CD14-positive monocyte (primary cell): ENCODE measurements at regions of chr12 and their contacts with region 1.

Region 1: GRCh38 chr12:122463806-122464205 is 36.9 kb downstream of the ZCCHC8 start:
- DNase-seq: no peak
- H3K4me3 ChIP-seq: no peak overlapping the region
- H3K4me3 Mint-ChIP-seq: no peak overlapping the region
- H3K27ac ChIP-seq: peak overlapping the region in 1 of 2 donors; percentile 24
- H3K27ac Mint-ChIP-seq: peak overlapping the region; percentile 26 to 92 (median 86)
- H3K4me1 ChIP-seq: peaks cover 5 to 8% of the 10 kb centered on the region in 2 donors
- H3K4me1 Mint-ChIP-seq: peaks cover 9% of the 10 kb centered on the region
- H3K27me3 ChIP-seq: no peaks in the 10 kb centered on the region
- H3K27me3 Mint-ChIP-seq: peaks cover 2 to 5% (median 5%) of the 10 kb centered on the region in 3 donors
- CTCF ChIP-seq: no peak

Region 2: GRCh38 chr12:122421821-122422729 is 41.7 kb before region 1 on chr12 and contains the start of gene CLIP1:
- intact Hi-C with region 1: loop called in 1 of 2 experiments (anchors 5 kb)
- DNase-seq: peak in 2 of 3 donors; percentile 44 to 46
- H3K4me3 ChIP-seq: peak within 1 kb of the TSS; percentile 84 to 93 (median 91)
- H3K4me3 Mint-ChIP-seq: peak within 1 kb of the TSS; percentile 89 to 96
- H3K27ac ChIP-seq: peak within 1 kb of the TSS; percentile 97 to 98
- H3K27ac Mint-ChIP-seq: peak within 1 kb of the TSS; percentile 93 to 98 (median 98)
- H3K4me1 ChIP-seq: peaks cover 28 to 32% of the 10 kb centered on the region in 2 donors
- H3K4me1 Mint-ChIP-seq: peaks cover 22% of the 10 kb centered on the region
- H3K27me3 ChIP-seq: no peaks in the 10 kb centered on the region
- H3K27me3 Mint-ChIP-seq: peaks cover 2 to 3% (median 2%) of the 10 kb centered on the region in 3 donors
- CTCF ChIP-seq: peak; percentile 61
- polyA plus RNA-seq, gene CLIP1: 6.7 to 50.9 (median 12.9) TPM

Region 3: GRCh38 chr12:122571821-122572220 is 108.0 kb after region 1 on chr12:
- intact Hi-C with region 1: no loop called
- DNase-seq: no peak
- H3K4me3 ChIP-seq: no peak overlapping the region
- H3K4me3 Mint-ChIP-seq: no peak overlapping the region
- H3K27ac ChIP-seq: no peak overlapping the region
- H3K27ac Mint-ChIP-seq: peak overlapping the region in 3 of 7 donors; percentile 13 to 42 (median 25)
- H3K4me1 ChIP-seq: no peaks in the 10 kb centered on the region
- H3K4me1 Mint-ChIP-seq: no peaks in the 10 kb centered on the region
- H3K27me3 ChIP-seq: no peaks in the 10 kb centered on the region
- H3K27me3 Mint-ChIP-seq: no peaks in the 10 kb centered on the region
- CTCF ChIP-seq: no peak